T-cell (primary cell): ENCODE measurements at regions of chr3 and their contacts with region 1.

Region 1: DNA sequence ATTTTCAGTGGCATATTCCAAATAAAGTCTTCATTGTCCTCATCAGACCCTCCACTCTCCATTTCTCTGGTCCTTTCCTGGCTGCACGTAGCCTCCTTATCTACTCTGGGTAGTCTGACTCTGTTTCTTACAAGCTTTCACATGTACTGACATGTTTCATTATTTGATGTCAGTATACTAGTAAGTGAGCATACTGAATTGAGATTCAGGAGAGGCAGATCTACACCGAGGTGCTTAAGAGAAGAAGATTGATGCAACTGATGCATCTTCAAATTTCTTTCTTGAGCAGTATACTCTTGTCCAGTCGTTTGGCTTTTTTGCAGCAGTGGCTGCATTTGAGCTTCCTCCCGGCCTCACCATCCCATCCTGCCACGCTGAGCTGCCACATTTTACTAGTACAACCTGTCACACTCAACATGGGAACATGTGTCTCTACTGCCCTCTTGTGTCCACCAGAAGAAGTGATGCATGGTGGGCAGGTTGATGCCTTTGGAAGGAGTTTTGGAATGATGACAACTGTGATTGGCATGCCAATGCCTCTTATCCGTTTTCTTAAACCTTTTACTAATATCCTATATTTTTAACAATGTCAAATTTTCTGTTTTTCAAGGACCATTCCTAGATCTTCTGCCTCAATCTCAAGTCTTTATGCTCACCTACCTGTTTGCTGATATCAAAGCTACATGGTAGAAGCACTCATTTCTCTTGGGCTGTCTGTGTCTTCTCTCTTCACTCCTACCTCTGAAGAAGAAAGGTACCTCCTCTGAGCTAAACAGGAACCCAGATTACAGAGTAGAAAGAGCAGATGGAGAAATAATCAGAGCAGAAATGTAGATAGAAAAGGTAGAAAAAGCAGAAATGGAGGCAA is 38.7 kb downstream of the GUCA1C start:
- DNase-seq: peak; percentile 12 to 86 (median 50)
- ATAC-seq: peak; percentile 86 to 96 (median 96)
- H3K4me3 ChIP-seq: no peak overlapping the region
- H3K4me3 Mint-ChIP-seq: peak overlapping the region; percentile 41 to 59 (median 57)
- H3K27ac ChIP-seq: no peak overlapping the region
- H3K27ac Mint-ChIP-seq: peak overlapping the region; percentile 21 to 23
- H3K4me1 ChIP-seq: peaks cover 0 to 5% of the 10 kb centered on the region in 2 experiments
- H3K4me1 Mint-ChIP-seq: peaks cover 14 to 23% (median 20%) of the 10 kb centered on the region in 3 donors
- H3K27me3 ChIP-seq: no peaks in the 10 kb centered on the region
- H3K27me3 Mint-ChIP-seq: peaks cover 0 to 7% of the 10 kb centered on the region in 2 donors

Region 2: GRCh38 chr3:108489771-108490170 is 425.2 kb before region 1 on chr3:
- CTCF ChIA-PET with region 1: interaction called, 14 to 16 read pairs
- POLR2A ChIA-PET with region 1: no interaction called
- DNase-seq: peak in 28 of 35 experiments; percentile 3 to 83 (median 25)
- ATAC-seq: peak; percentile 54 to 80 (median 77)
- H3K4me3 ChIP-seq: no peak overlapping the region
- H3K4me3 Mint-ChIP-seq: no peak overlapping the region
- H3K27ac ChIP-seq: no peak overlapping the region
- H3K27ac Mint-ChIP-seq: no peak overlapping the region
- H3K4me1 ChIP-seq: no peaks in the 10 kb centered on the region
- H3K4me1 Mint-ChIP-seq: peaks cover 2 to 5% (median 3%) of the 10 kb centered on the region in 3 donors
- H3K27me3 ChIP-seq: no peaks in the 10 kb centered on the region
- H3K27me3 Mint-ChIP-seq: no peaks in the 10 kb centered on the region

Region 3: GRCh38 chr3:108662130-108662738 is 252.8 kb before region 1 on chr3:
- CTCF ChIA-PET with region 1: interaction called, 51 to 81 read pairs
- POLR2A ChIA-PET with region 1: no interaction called
- DNase-seq: peak in 31 of 35 experiments; percentile 10 to 88 (median 36)
- ATAC-seq: peak; percentile 67 to 77 (median 70)
- H3K4me3 ChIP-seq: no peak overlapping the region
- H3K4me3 Mint-ChIP-seq: no peak overlapping the region
- H3K27ac ChIP-seq: no peak overlapping the region
- H3K27ac Mint-ChIP-seq: no peak overlapping the region
- H3K4me1 ChIP-seq: peaks cover 0 to under 1% of the 10 kb centered on the region in 2 experiments
- H3K4me1 Mint-ChIP-seq: peaks cover 11 to 16% (median 11%) of the 10 kb centered on the region in 3 donors
- H3K27me3 ChIP-seq: no peaks in the 10 kb centered on the region
- H3K27me3 Mint-ChIP-seq: no peaks in the 10 kb centered on the region

Region 4: GRCh38 chr3:108757404-108757982 is 157.5 kb before region 1 on chr3 and contains the start of gene RETNLB:
- CTCF ChIA-PET with region 1: interaction called in 1 of 2 experiments, 11 read pairs
- POLR2A ChIA-PET with region 1: no interaction called
- DNase-seq: no peak
- ATAC-seq: no peak
- H3K4me3 ChIP-seq: no peak within 1 kb of the TSS
- H3K4me3 Mint-ChIP-seq: no peak within 1 kb of the TSS
- H3K27ac ChIP-seq: no peak within 1 kb of the TSS
- H3K27ac Mint-ChIP-seq: no peak within 1 kb of the TSS
- H3K4me1 ChIP-seq: peaks cover 0 to 2% of the 10 kb centered on the region in 2 experiments
- H3K4me1 Mint-ChIP-seq: peaks cover 5 to 30% (median 11%) of the 10 kb centered on the region in 3 donors
- H3K27me3 ChIP-seq: no peaks in the 10 kb centered on the region
- H3K27me3 Mint-ChIP-seq: no peaks in the 10 kb centered on the region
- total RNA-seq, gene RETNLB: 0.50 TPM in 1 of 5 donors, not detected in the others